Activated CD4-positive, alpha-beta memory T cell treated with anti-CD3 and anti-CD28 coated beads for 36 hours (primary cell): ENCODE measurements at regions of chr1 and their contacts with region 1.

Region 1: DNA sequence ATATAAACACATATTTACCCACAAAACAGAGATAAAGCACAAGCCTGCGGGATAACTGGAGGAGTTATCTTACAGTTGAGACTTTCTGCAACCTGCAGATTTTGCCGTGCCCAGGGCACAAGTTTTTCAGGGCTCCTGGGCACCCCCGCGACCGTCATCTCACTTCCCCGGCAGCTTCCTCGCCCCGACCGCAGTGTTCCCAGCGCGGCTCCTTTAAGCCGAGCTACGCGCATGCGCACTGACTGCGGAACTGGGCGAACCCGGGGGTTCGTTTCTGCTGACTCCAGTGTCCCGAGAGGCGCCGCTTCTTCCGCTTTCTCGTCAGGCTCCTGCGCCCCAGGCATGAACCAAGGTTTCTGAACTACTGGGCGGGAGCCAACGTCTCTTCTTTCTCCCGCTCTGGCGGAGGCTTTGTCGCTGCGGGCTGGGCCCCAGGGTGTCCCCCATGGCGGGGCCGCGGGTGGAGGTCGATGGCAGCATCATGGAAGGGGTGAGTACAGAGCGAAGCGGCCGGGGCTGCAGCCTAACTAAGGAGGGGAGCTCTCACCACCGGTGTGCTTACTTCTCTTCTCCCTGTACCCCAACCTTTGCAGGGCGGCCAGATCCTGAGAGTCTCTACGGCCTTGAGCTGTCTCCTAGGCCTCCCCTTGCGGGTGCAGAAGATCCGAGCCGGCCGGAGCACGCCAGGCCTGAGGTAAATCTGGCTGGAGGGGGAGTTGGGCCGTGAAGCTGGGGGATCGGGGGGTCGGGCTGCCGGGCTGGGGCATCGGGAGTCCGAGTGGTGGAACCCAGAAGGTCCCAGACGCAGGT is at the start of gene RTCA:
- DNase-seq: peak; percentile 96
- H3K4me3 Mint-ChIP-seq: peak within 1 kb of the TSS; percentile 100
- H3K27ac Mint-ChIP-seq: peak within 1 kb of the TSS; percentile 97
- H3K4me1 Mint-ChIP-seq: peaks cover 40% of the 10 kb centered on the region
- H3K27me3 Mint-ChIP-seq: no peaks in the 10 kb centered on the region
- total RNA-seq, gene RTCA: 56.6 to 58.2 TPM

Region 2: DNA sequence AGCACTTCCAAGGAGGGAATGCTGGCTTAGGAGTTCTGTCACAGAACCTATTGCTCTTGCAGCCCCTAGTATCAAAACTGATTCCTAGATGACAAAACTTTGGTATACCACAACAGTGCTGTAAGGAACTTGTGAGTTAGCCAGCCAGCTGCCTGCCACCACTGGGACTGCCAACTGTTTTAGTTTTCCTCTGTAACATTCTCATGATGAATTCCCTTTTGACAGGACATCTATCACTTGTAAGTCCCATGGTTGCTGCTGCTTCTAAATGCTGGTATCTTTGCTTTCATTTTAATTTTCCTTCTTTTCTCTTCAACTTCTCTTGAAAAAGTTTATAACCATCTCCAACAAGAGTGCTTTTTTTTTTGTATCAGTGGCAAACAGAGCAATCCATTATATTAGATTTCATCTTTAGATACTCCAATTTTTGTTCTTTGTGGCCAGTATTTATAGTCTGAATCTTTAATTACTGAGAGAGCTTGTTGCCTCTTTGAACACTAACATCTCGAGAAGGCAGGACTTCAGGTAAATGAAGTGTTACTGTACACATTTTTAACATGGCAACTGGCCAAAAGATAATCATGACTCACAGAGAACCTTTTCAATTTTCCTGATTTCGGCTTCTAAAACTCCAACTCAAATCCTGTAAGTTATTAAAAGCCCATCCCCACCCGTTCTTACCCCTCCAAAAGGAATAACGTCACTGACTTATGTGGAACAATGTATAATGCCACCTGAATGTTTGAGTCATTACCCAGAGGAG is 36.3 kb before region 1 on chr1:
- CTCF ChIA-PET with region 1: no interaction called
- POLR2A ChIA-PET with region 1: no interaction called
- intact Hi-C with region 1: loop called (anchors 5 kb)
- DNase-seq: no peak
- H3K4me3 Mint-ChIP-seq: no peak overlapping the region
- H3K27ac Mint-ChIP-seq: no peak overlapping the region
- H3K4me1 Mint-ChIP-seq: peaks cover 20% of the 10 kb centered on the region
- H3K27me3 Mint-ChIP-seq: no peaks in the 10 kb centered on the region

Region 3: GRCh38 chr1:100249537-100250257 is 16.4 kb before region 1 on chr1 and contains the start of gene DBT:
- CTCF ChIA-PET with region 1: interaction called, 3 read pairs
- POLR2A ChIA-PET with region 1: interaction called, 15 read pairs
- intact Hi-C with region 1: loop called (anchors 1 kb)
- DNase-seq: peak; percentile 96
- H3K4me3 Mint-ChIP-seq: no peak within 1 kb of the TSS
- H3K27ac Mint-ChIP-seq: no peak within 1 kb of the TSS
- H3K4me1 Mint-ChIP-seq: peaks cover 21% of the 10 kb centered on the region
- H3K27me3 Mint-ChIP-seq: no peaks in the 10 kb centered on the region
- total RNA-seq, gene DBT: 11.4 to 11.7 TPM

Region 4: DNA sequence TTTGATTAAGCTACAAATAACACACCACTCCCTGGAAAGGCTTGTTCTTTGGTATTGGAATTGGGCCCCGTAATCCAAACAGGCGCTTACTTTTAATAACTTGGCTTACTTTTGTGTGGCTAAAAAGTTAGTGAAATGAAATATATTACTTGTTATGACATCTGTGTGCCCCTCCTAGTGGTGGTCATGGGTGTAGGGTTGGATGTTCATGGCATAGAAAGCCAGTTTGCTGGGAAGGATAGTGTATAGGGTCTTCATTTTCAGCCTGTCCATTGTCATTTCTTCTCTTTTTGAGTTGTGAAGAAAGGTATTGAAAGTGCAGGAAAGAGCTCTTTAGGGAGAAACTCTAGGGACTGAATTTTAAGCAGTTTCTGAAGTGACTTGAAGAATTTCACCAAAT is 92.1 kb after region 1 on chr1:
- CTCF ChIA-PET with region 1: interaction called, 10 read pairs
- POLR2A ChIA-PET with region 1: interaction called, 18 read pairs
- intact Hi-C with region 1: no loop called
- DNase-seq: no peak
- H3K4me3 Mint-ChIP-seq: no peak overlapping the region
- H3K27ac Mint-ChIP-seq: peak overlapping the region; percentile 59
- H3K4me1 Mint-ChIP-seq: peaks cover 80% of the 10 kb centered on the region
- H3K27me3 Mint-ChIP-seq: no peaks in the 10 kb centered on the region

Region 5: GRCh38 chr1:100414693-100415497 is 148.8 kb after region 1 on chr1:
- CTCF ChIA-PET with region 1: no interaction called
- POLR2A ChIA-PET with region 1: no interaction called
- intact Hi-C with region 1: no loop called
- DNase-seq: no peak
- H3K4me3 Mint-ChIP-seq: peak overlapping the region; percentile 39
- H3K27ac Mint-ChIP-seq: peak overlapping the region; percentile 90
- H3K4me1 Mint-ChIP-seq: peaks cover 72% of the 10 kb centered on the region
- H3K27me3 Mint-ChIP-seq: no peaks in the 10 kb centered on the region